Ascending aorta (tissue), 2 donors: ENCODE measurements at regions of chr2 and their contacts with region 1.

Region 1: DNA sequence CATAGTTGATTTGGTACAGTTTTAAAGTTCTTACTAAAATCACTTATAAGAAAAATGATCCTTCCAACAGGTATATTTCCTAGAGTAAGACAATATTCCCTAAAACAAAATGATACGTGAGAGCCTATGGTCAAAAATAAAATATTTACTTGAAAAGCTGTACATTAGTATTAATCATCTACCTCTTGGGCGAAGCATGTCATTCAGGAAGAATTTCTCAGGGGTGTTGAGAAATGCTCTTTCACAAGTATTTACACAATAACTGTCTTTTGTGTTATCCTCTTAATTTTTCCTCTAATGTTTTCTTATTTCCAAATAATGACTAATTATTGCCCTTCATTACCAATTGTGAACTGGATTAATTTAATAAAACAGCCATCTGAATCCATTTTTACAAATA is 466.3 kb downstream of the SATB2 start:
- DNase-seq: no peak
- H3K4me3 ChIP-seq: no peak overlapping the region
- H3K27ac ChIP-seq: no peak overlapping the region
- H3K4me1 ChIP-seq: no peaks in the 10 kb centered on the region
- H3K27me3 ChIP-seq: no peaks in the 10 kb centered on the region
- CTCF ChIP-seq: no peak

Region 2: DNA sequence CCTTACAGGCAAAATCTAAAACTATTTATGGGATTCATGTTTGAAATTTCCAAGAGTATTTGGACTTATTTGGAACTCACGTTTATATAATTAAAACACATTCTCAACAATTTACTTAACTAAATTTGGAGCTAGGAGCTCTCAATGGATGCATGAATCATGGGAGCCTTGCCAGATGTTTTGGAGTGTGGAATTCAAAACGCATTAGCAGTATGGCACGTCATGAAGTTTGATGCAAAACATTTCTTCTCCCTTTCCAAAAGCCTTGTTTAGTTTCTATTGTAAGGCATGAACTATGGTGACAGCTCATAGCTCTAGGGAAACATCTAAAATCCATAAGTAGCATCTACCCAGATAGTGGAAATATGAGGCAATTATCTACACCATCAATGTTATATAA is 235.3 kb before region 1 on chr2:
- intact Hi-C with region 1: loop called (anchors 10 kb)
- DNase-seq: no peak
- H3K4me3 ChIP-seq: no peak overlapping the region
- H3K27ac ChIP-seq: no peak overlapping the region
- H3K4me1 ChIP-seq: no peaks in the 10 kb centered on the region
- H3K27me3 ChIP-seq: no peaks in the 10 kb centered on the region
- CTCF ChIP-seq: no peak

Region 3: GRCh38 chr2:199018826-199019225 is 27.4 kb after region 1 on chr2:
- intact Hi-C with region 1: no loop called
- DNase-seq: no peak
- H3K4me3 ChIP-seq: no peak overlapping the region
- H3K27ac ChIP-seq: no peak overlapping the region
- H3K4me1 ChIP-seq: no peaks in the 10 kb centered on the region
- H3K27me3 ChIP-seq: no peaks in the 10 kb centered on the region
- CTCF ChIP-seq: no peak

Region 4: GRCh38 chr2:199303728-199304177 is 312.3 kb after region 1 on chr2:
- intact Hi-C with region 1: no loop called
- DNase-seq: peak; percentile 25 to 86
- H3K4me3 ChIP-seq: peak overlapping the region in 1 of 2 donors; percentile 20
- H3K27ac ChIP-seq: peak overlapping the region; percentile 81 to 83
- H3K4me1 ChIP-seq: peaks cover 0 to 20% of the 10 kb centered on the region in 2 donors
- H3K27me3 ChIP-seq: no peaks in the 10 kb centered on the region
- CTCF ChIP-seq: no peak